PC-9 (cell line): ENCODE measurements at regions of chr5 and their contacts with region 1.

Region 1: GRCh38 chr5:167261309-167262100 is 1029.9 kb upstream of the WWC1 start:
- DNase-seq: no peak
- H3K4me3 ChIP-seq: no peak overlapping the region
- H3K27ac ChIP-seq: no peak overlapping the region
- H3K4me1 ChIP-seq: no peaks in the 10 kb centered on the region
- H3K27me3 ChIP-seq: no peaks in the 10 kb centered on the region
- CTCF ChIP-seq: peak; percentile 59

Region 2: GRCh38 chr5:167284491-167284890 is 23.0 kb after region 1 on chr5:
- CTCF ChIA-PET with region 1: interaction called, 10 read pairs
- POLR2A ChIA-PET with region 1: no interaction called
- intact Hi-C with region 1: no loop called
- DNase-seq: no peak
- H3K4me3 ChIP-seq: no peak overlapping the region
- H3K27ac ChIP-seq: no peak overlapping the region
- H3K4me1 ChIP-seq: no peaks in the 10 kb centered on the region
- H3K27me3 ChIP-seq: no peaks in the 10 kb centered on the region
- CTCF ChIP-seq: no peak

Region 3: DNA sequence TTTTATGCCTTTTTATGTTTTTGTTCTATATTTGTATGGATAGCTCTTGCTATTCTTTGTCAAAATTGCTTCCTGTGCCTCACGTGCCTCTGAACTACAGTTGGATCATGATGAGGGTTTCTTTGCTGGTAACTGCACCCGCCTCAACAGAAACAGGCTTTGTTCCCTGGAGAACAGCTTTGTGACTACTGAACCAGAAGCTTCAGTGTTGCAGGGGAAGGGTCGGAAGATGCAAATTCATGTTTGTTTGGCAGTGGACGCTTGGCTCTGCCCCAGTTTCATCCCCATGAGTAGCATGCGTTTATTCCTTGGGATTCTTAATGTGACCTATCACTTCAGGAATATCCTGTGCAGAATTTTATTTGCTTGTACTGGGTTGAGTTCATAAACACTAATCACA is 70.8 kb after region 1 on chr5:
- CTCF ChIA-PET with region 1: no interaction called
- POLR2A ChIA-PET with region 1: no interaction called
- intact Hi-C with region 1: loop called (anchors 5 kb)
- DNase-seq: no peak
- H3K4me3 ChIP-seq: no peak overlapping the region
- H3K27ac ChIP-seq: no peak overlapping the region
- H3K4me1 ChIP-seq: no peaks in the 10 kb centered on the region
- H3K27me3 ChIP-seq: 0 out of 2 replicates have a peak, but pooled peaks cover 8% of the 10 kb centered on the region
- CTCF ChIP-seq: no peak